ENCODE measurements at regions of chr1 and their contacts with region 1.

Region 1: GRCh38 chr1:7042322-7043190 is 257.3 kb downstream of the CAMTA1 start:
- DNase-seq: peak in 2 of 4 donors; percentile 15 to 25
- ATAC-seq: peak; percentile 52
- H3K4me3 ChIP-seq: no peak overlapping the region
- H3K27ac ChIP-seq: no peak overlapping the region
- H3K4me1 ChIP-seq: no peaks in the 10 kb centered on the region
- H3K27me3 ChIP-seq: no peaks in the 10 kb centered on the region
- CTCF ChIP-seq: peak; percentile 40 to 67 (median 62)
- POLR2A ChIP-seq: no peak

Region 2: DNA sequence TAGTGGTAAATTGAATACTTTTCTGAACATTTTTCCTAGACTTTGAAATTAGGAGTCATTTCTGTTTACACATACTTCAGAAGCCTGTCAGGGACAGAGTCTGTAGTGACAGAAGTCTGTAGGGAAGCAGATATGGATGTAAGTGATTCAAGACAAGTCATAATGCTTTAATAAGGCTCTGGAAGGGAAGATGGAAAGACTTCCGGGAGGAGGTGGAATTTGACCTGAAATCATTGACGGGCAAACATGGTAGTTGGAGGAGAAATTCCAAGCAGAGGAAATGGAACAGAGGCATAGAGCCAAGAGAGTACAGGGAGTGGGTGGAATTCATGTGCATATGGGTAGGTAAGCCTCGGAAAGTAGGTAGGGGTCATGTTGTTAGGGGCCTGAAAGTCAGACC is 234.8 kb before region 1 on chr1:
- intact Hi-C with region 1: no loop called
- DNase-seq: no peak
- ATAC-seq: peak; percentile 27
- H3K4me3 ChIP-seq: no peak overlapping the region
- H3K27ac ChIP-seq: no peak overlapping the region
- H3K4me1 ChIP-seq: peaks cover 23% of the 10 kb centered on the region
- H3K27me3 ChIP-seq: no peaks in the 10 kb centered on the region
- CTCF ChIP-seq: no peak
- POLR2A ChIP-seq: no peak

Region 3: DNA sequence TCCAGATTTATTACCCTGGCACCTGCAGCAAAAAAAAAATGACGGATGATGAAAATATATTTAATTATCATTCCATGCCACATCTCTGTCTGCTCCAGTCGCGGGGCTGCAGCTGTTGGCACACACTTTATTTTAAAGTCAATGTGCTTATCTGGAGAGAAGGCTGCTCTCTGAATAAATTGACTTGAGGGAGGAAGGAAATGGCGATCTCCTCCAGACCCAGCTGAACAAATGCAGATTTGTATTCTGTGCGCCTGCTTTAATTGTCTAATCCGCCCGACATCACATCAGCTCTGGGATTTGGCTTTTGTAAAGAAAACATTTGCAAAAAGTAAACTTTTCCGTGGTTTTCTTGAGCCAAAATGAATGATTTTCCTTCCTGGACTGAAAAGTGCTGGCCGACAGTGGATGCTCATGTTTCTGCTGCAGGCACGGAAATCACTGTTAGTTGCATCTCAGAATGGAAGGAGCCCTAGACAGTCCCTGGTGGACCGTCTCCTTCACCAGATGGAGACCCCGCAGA is 107.1 kb before region 1 on chr1:
- intact Hi-C with region 1: no loop called
- DNase-seq: no peak
- ATAC-seq: no peak
- H3K4me3 ChIP-seq: no peak overlapping the region
- H3K27ac ChIP-seq: no peak overlapping the region
- H3K4me1 ChIP-seq: peaks cover 5% of the 10 kb centered on the region
- H3K27me3 ChIP-seq: no peaks in the 10 kb centered on the region
- CTCF ChIP-seq: no peak
- POLR2A ChIP-seq: no peak

Region 4: GRCh38 chr1:7224644-7225043 is 182.1 kb after region 1 on chr1:
- intact Hi-C with region 1: loop called (anchors 10 kb)
- DNase-seq: peak in 3 of 4 donors; percentile 19 to 38 (median 26)
- ATAC-seq: no peak
- H3K4me3 ChIP-seq: no peak overlapping the region
- H3K27ac ChIP-seq: no peak overlapping the region
- H3K4me1 ChIP-seq: no peaks in the 10 kb centered on the region
- H3K27me3 ChIP-seq: no peaks in the 10 kb centered on the region
- CTCF ChIP-seq: peak in 2 of 7 experiments; percentile 17 to 18
- POLR2A ChIP-seq: no peak

Region 5: DNA sequence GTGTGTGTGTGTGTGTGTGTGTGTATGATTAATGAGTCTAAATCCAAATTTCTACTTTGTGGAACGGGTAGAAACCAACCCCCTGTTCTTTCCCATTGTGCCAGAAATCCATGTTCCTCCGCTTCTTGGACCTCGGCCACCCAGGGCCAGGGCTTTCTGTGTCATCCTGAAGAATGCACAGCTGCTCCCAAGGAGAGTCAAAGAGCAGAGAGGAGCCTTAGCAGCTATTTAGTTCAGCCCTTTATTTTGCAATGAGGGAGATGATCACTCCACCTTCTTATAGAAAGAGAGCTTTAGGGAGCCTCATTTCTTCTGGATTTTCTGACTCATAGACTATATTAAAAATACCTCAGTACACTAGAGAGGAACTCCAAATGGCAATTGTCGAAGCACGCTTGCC is 239.3 kb after region 1 on chr1:
- intact Hi-C with region 1: no loop called
- DNase-seq: no peak
- ATAC-seq: no peak
- H3K4me3 ChIP-seq: no peak overlapping the region
- H3K27ac ChIP-seq: no peak overlapping the region
- H3K4me1 ChIP-seq: no peaks in the 10 kb centered on the region
- H3K27me3 ChIP-seq: no peaks in the 10 kb centered on the region
- CTCF ChIP-seq: no peak
- POLR2A ChIP-seq: no peak

Region 6: GRCh38 chr1:7646981-7647901 is 604.7 kb after region 1 on chr1:
- intact Hi-C with region 1: loop called (anchors 5 kb)
- DNase-seq: peak; percentile 60 to 80 (median 74)
- ATAC-seq: peak; percentile 41
- H3K4me3 ChIP-seq: no peak overlapping the region
- H3K27ac ChIP-seq: no peak overlapping the region
- H3K4me1 ChIP-seq: peaks cover 5% of the 10 kb centered on the region
- H3K27me3 ChIP-seq: no peaks in the 10 kb centered on the region
- CTCF ChIP-seq: peak; percentile 79 to 98 (median 90)
- POLR2A ChIP-seq: no peak

Measured in body of pancreas (tissue), 4 donors.